BJ (cell line): ENCODE measurements at regions of chr2 and their contacts with region 1.

Region 1: GRCh38 chr2:31534636-31535035 is 46.1 kb downstream of the SRD5A2 start:
- DNase-seq: no peak
- H3K4me3 ChIP-seq: no peak overlapping the region
- H3K27me3 ChIP-seq: 0 out of 2 replicates have a peak, but pooled peaks cover 3% of the 10 kb centered on the region
- CTCF ChIP-seq: no peak

Region 2: DNA sequence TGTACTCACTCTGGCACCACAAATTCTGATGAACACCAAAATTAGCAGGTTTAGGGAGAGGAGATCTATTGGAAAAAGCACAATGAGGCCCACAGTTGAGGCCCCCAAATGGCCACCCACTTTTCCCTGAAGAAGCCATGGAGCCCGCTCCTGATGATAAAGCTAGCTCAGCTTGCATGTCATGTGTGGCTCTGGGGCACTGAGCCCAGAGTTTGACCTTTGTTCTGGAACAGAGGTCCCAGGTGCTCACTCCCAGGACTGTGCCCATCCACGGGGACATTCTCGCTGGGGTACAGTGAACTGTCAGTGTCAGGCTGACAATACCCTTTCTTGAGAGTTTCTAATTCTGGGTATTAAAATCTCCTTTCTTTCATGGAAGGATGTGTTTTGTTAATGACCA is 156.2 kb before region 1 on chr2:
- CTCF ChIA-PET with region 1: no interaction called
- POLR2A ChIA-PET with region 1: no interaction called
- DNase-seq: no peak
- H3K4me3 ChIP-seq: no peak overlapping the region
- H3K27me3 ChIP-seq: no peaks in the 10 kb centered on the region
- CTCF ChIP-seq: no peak

Region 3: DNA sequence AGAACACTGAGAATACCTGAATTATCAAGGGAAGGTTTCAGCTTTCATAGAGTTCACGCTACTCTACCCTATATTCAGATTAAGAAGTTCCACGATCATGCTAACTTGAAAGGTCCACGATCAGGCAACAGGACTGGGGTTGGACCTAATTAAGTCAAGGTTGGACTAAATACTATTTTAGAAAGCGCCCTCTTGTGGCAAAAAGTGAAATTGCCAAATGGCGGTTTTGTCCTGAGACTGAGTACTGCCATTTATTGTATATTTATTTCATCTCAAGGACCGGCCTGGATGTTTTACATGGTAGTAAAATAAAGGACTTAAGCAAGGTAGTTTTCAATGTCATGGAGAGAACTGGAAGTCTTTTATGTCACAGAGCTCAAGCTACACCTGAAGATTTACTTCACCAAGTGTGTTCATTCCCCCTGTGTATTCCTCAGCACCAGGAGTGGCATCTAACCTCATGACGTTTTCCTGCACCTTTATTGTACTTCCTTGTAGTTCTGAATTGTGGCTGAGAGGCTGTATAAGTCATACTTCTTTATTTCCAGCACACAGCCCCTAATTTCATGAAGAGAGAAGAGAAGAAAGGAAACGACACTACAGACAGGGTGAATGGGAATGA is 10.7 kb before region 1 on chr2:
- CTCF ChIA-PET with region 1: interaction called, 11 read pairs
- POLR2A ChIA-PET with region 1: no interaction called
- DNase-seq: no peak
- H3K4me3 ChIP-seq: no peak overlapping the region
- H3K27me3 ChIP-seq: no peaks in the 10 kb centered on the region
- CTCF ChIP-seq: peak; percentile 71

Region 4: DNA sequence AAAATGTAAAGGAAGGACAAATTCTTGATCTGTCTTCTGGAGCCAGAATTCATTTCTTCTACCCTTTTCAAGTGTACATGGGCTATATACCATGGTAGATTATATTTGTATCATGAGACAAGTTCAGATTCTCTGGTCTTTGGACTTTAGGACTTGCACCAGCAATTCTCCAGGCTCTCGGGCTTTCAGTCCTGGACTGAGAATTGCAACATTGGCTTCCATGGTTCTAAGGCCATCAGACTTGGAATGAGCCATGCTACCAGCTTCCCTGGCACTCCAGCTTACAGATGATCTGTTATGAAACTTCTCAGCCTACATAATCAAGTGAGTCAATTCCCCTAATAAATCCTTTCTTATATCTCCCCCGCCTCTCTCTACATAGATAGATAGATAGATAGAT is 12.8 kb after region 1 on chr2:
- CTCF ChIA-PET with region 1: no interaction called
- POLR2A ChIA-PET with region 1: no interaction called
- DNase-seq: no peak
- H3K4me3 ChIP-seq: no peak overlapping the region
- H3K27me3 ChIP-seq: no peaks in the 10 kb centered on the region
- CTCF ChIP-seq: no peak

Region 5: DNA sequence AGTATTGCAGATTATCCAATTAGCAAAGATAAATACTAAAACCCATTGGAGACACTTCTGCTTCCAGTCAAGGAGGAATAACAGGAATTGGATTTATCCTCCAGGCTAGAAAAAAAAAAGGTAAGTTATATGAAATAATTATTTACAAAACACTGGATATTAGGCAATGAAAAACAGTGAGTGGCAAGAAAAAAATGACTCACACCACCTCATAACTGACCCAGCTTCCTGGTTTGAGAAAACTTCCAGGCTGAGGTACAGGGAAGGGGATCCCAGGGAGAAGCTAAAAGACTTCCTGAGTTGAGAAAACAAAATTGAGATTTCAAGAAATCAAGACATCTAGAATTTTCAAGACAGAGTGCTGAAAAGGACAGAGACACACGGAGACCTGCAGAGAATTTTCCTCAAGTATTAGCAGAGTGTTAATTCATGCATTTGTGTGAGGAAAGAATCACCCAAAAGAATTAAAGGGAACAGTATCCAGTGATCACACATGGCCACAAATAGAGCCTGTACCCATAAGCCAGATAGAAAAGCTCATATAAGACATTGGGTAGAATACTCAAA is 28.7 kb after region 1 on chr2:
- CTCF ChIA-PET with region 1: no interaction called
- POLR2A ChIA-PET with region 1: no interaction called
- DNase-seq: no peak
- H3K4me3 ChIP-seq: no peak overlapping the region
- H3K27me3 ChIP-seq: no peaks in the 10 kb centered on the region
- CTCF ChIP-seq: no peak